GM10248 (cell line): ENCODE measurements at regions of chr18 and their contacts with region 1.

Region 1: GRCh38 chr18:76844742-76845485 is 22.6 kb downstream of the ZNF236 start:
- DNase-seq: no peak
- CTCF ChIP-seq: no peak

Region 2: DNA sequence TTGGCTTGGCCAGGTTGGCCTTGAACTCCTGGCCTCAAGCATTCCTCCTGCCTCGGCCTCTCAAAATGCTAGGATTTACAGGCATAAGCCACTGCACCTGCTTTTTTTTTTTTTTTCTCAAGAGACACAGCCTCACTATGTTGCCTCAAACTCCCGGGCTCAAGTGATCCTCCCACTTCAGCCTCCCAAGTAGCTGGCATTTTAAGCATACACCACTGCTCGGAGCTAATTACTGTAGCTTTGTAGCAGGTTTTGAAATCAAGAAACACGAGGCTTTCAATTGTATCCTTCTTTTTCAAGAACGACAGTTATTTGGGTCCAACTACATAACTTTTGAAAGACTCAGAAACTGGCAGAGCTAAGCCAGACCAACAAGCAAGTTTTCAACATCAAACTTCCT is 32.7 kb before region 1 on chr18:
- CTCF ChIA-PET with region 1: no interaction called
- POLR2A ChIA-PET with region 1: no interaction called
- DNase-seq: no peak
- CTCF ChIP-seq: no peak

Region 3: GRCh38 chr18:76822510-76823160 is 22.3 kb before region 1 on chr18 and contains the start of gene ZNF236:
- CTCF ChIA-PET with region 1: interaction called, 10 read pairs
- POLR2A ChIA-PET with region 1: no interaction called
- DNase-seq: peak; percentile 84
- CTCF ChIP-seq: peak; percentile 5